ENCODE measurements at regions of chr6 and their contacts with region 1.

Region 1: GRCh38 chr6:109296452-109296851 is 85.8 kb downstream of the CD164 start:
- DNase-seq: no peak
- ATAC-seq: no peak
- H3K4me3 ChIP-seq: no peak overlapping the region
- H3K27ac ChIP-seq: no peak overlapping the region
- H3K4me1 ChIP-seq: no peaks in the 10 kb centered on the region
- H3K27me3 ChIP-seq: no peaks in the 10 kb centered on the region; a peak in 1 of 4 replicates
- CTCF ChIP-seq: no peak
- EP300 ChIP-seq: no peak
- POLR2A ChIP-seq: no peak
- RAD21 ChIP-seq: no peak

Region 2: GRCh38 chr6:109308018-109308492 is 11.6 kb after region 1 on chr6:
- CTCF ChIA-PET with region 1: interaction called, 4 read pairs
- POLR2A ChIA-PET with region 1: no interaction called
- RAD21 ChIA-PET with region 1: no interaction called
- SMC1A ChIA-PET with region 1: interaction called, 11 read pairs
- in situ Hi-C with region 1: no loop called
- intact Hi-C with region 1: no loop called
- DNase-seq: no peak
- ATAC-seq: no peak
- H3K4me3 ChIP-seq: no peak overlapping the region
- H3K27ac ChIP-seq: no peak overlapping the region
- H3K4me1 ChIP-seq: peaks cover 12% of the 10 kb centered on the region; the same call in 1 of the 2 replicates
- H3K27me3 ChIP-seq: no peaks in the 10 kb centered on the region
- CTCF ChIP-seq: no peak
- EP300 ChIP-seq: no peak
- POLR2A ChIP-seq: no peak
- RAD21 ChIP-seq: no peak

Measured in GM12878 (cell line).